GM12878 (cell line): ENCODE measurements at regions of chr17 and their contacts with region 1.

Region 1: DNA sequence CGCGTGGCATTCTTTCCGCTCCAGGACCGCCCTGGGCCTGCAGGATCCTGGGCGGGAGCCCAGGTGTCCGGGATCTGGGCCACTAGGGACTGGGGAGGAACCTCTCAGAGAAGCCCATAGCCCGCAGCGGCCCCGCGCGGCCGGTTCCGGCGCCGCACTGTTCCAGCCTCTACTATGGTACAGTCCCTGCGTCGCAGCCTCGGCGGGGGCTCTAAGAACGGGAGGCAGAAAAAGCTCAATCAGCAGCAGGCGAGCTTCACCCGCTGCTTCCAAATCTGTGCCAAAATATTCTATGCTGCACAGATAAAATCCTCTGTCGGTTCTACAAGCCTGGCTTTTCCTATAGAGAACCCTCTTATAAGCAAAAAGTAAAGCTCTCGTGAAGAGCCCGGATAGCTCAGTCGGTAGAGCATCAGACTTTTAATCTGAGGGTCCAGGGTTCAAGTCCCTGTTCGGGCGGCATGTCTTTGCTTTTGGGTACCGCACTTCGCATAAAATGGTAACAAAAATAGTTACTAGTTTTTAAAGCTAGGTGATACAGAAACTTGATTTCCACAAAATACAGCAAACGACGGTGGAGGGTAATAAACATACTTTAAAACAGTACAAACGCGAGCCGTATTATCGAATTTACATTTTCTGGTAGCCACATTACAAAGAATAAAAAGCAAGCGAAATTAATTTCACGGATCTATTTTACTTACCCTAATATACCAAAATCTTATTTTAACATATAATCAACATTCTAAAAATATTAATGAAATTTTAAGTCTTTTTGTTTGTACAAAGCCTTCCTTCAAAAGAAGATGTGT is 661 bp upstream of the ALOXE3 start:
- DNase-seq: peak; percentile 57
- ATAC-seq: peak; percentile 70
- H3K4me3 ChIP-seq: peak overlapping the region; percentile 86
- H3K27ac ChIP-seq: peak overlapping the region; percentile 12; the same call in 1 of the 2 replicates
- H3K4me1 ChIP-seq: peaks cover 26% of the 10 kb centered on the region
- H3K27me3 ChIP-seq: peaks cover 3 to 9% of the 10 kb centered on the region in 2 experiments; a peak in 3 of 4 replicates
- CTCF ChIP-seq: peak; percentile 85 to 94 (median 93)
- EP300 ChIP-seq: peak in 1 of 2 experiments; percentile 82; a peak in 1 of 4 replicates
- POLR2A ChIP-seq: no peak
- RAD21 ChIP-seq: peak; percentile 46

Region 2: DNA sequence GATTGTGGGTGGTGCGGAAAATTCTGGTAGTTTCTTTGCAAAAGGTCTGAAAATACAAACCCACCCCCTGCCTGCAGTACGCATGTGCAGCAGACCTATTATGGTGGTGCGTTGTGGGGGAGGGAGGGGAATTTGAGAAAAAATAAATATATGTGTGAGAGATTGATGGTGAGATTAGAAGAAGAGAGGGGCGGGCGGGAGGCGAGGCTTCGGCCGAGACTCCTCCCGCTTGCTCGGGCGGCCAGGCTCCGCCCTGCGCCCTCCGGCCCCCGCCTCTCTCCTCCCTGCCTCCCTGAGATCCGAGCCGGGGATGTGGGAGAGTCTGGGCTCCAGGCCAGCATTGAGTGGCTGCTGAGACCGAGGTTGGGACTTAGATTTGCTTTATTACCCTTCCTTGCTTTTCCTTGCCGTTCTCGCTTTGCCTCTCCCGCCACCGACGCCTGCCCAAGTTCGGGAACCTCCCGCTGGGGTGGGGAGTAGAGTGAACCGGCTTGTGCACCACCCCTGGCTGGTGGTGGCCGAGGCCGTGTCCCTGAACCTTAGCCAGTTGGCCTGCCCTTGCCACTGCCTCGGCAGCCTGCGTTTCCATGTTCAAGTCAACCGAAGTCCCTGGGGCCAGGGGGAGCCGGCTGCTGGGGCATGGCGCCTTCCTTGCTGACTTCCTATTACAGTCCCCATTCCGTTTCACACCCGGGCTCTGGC is 231.3 kb before region 1 on chr17:
- CTCF ChIA-PET with region 1: no interaction called
- POLR2A ChIA-PET with region 1: no interaction called
- RAD21 ChIA-PET with region 1: no interaction called
- SMC1A ChIA-PET with region 1: no interaction called
- in situ Hi-C with region 1: no loop called
- intact Hi-C with region 1: no loop called
- DNase-seq: peak; percentile 75
- ATAC-seq: peak; percentile 82
- H3K4me3 ChIP-seq: peak overlapping the region; percentile 88
- H3K27ac ChIP-seq: peak overlapping the region; percentile 91
- H3K4me1 ChIP-seq: peaks cover 6% of the 10 kb centered on the region
- H3K27me3 ChIP-seq: no peaks in the 10 kb centered on the region
- CTCF ChIP-seq: no peak
- EP300 ChIP-seq: peak in 1 of 2 experiments; percentile 54; a peak in 2 of 4 replicates
- POLR2A ChIP-seq: no peak; the same call in 1 of the 2 replicates
- RAD21 ChIP-seq: no peak

Region 3: DNA sequence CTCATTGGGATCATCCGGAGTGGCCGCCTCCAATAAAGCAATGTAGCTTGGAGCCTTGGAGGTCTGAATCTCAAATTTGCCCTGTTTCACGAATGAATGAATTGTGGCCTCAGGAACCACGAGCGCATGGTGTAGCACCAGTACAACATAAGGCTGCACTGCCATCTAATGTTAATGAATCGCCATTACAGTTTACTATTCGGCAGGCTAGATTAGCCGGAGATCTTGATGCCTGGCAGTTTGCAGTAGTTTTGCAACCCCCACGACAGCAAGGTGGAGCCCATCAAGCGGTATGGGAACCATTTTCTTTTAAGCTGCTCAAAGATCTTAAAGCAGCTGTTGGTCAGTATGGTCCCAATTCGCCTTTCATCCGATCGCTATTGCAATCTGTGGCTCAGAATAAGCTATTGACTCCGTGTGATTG is 61.3 kb before region 1 on chr17:
- CTCF ChIA-PET with region 1: interaction called, 106 read pairs
- POLR2A ChIA-PET with region 1: no interaction called
- RAD21 ChIA-PET with region 1: interaction called, 12 read pairs
- SMC1A ChIA-PET with region 1: interaction called, 28 read pairs
- in situ Hi-C with region 1: no loop called
- intact Hi-C with region 1: loop called (anchors 5 kb)
- DNase-seq: peak; percentile 45
- ATAC-seq: peak; percentile 78
- H3K4me3 ChIP-seq: no peak overlapping the region
- H3K27ac ChIP-seq: no peak overlapping the region
- H3K4me1 ChIP-seq: peaks cover 14% of the 10 kb centered on the region
- H3K27me3 ChIP-seq: peaks cover 0 to 4% of the 10 kb centered on the region in 2 experiments; a peak in 1 of 4 replicates
- CTCF ChIP-seq: peak; percentile 69 to 81 (median 74)
- EP300 ChIP-seq: no peak
- POLR2A ChIP-seq: no peak
- RAD21 ChIP-seq: peak; percentile 80

Region 4: DNA sequence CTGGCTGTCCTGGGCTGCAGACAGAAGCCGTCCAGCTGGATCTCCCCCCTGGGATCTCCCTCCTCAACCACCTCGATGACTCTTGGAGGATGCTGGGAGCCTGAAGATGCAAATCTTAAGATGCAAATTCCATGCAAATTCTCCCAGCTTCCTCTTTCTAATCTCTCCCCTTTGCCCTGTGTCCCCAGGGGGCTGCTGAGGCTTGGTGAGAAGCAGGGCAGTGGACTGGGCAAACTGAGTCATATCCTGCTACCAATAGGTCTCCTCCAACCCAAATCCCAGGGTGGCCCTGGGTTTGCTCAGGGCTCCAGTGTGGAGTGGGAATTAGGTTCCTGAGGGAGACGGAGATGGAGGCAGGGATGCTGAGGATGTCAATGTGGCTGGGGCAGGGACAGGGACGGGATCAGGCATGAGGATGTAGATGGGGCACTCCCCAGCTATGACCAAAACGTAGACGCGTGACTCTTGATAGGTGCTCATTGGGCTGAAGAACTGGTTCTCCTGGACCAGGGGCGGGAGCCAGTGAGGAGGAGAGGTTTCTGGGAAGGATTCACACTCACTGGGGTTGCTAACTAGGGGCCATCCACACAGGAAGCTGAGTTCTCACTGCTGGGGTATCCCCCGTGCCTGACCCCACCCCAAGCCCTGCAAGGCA is 27.8 kb before region 1 on chr17:
- CTCF ChIA-PET with region 1: interaction called, 105 read pairs
- POLR2A ChIA-PET with region 1: interaction called, 7 read pairs
- RAD21 ChIA-PET with region 1: interaction called, 40 read pairs
- SMC1A ChIA-PET with region 1: interaction called, 16 read pairs
- in situ Hi-C with region 1: no loop called
- intact Hi-C with region 1: no loop called
- DNase-seq: peak; percentile 61
- ATAC-seq: peak; percentile 90
- H3K4me3 ChIP-seq: no peak overlapping the region
- H3K27ac ChIP-seq: no peak overlapping the region
- H3K4me1 ChIP-seq: peaks cover 8% of the 10 kb centered on the region
- H3K27me3 ChIP-seq: peaks cover 0 to 4% of the 10 kb centered on the region in 2 experiments; a peak in 1 of 4 replicates
- CTCF ChIP-seq: no peak
- EP300 ChIP-seq: 0 out of 4 replicates have a peak, but pooled peaks of 1 of the 2 experiments have one; percentile 21
- POLR2A ChIP-seq: no peak
- RAD21 ChIP-seq: no peak

Region 5: DNA sequence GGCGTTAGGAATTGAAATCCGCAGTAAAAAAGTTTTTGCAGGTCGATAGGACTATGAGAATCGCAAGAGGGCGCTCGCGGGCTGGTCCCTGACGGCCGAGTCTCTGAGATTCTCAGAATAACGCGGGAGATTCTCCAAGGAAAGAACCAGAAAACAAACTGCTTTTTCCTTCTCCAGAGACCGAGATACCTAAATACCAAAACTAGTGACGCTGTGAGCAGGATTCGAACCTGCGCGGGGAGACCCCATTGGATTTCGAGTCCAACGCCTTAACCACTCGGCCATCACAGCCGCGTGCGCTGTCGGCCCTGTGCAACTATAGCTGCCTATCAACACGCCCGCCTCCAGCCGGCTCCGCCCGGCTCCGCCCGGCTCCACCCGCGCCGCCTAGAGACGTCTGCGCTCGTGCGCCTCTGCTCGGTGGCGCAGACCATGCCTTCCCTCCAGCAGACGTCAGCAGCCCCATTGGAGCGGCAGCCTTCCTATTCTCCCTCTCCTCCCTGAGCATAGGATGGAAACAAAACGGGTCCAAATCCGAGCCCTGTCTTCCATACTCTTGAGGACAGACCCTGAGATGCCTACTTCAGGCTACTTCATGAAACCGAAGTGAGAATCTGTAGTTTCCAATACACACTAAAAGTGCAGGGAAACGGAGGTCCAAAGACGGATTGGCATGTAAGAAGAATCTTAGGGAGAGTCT is 19.8 kb after region 1 on chr17:
- CTCF ChIA-PET with region 1: interaction called, 40 read pairs
- POLR2A ChIA-PET with region 1: interaction called, 17 read pairs
- RAD21 ChIA-PET with region 1: interaction called, 32 read pairs
- SMC1A ChIA-PET with region 1: interaction called, 9 read pairs
- in situ Hi-C with region 1: no loop called
- intact Hi-C with region 1: loop called (anchors 1 kb)
- DNase-seq: peak; percentile 94
- ATAC-seq: peak; percentile 93
- H3K4me3 ChIP-seq: peak overlapping the region; percentile 72
- H3K27ac ChIP-seq: peak overlapping the region; percentile 97
- H3K4me1 ChIP-seq: peaks cover 7% of the 10 kb centered on the region
- H3K27me3 ChIP-seq: no peaks in the 10 kb centered on the region
- CTCF ChIP-seq: peak; percentile 68 to 78 (median 76)
- EP300 ChIP-seq: 0 out of 4 replicates have a peak, but pooled peaks of 1 of the 2 experiments have one; percentile 4
- POLR2A ChIP-seq: peak; percentile 81
- RAD21 ChIP-seq: peak; percentile 57

Region 6: GRCh38 chr17:8162233-8162996 is 43.4 kb after region 1 on chr17 and contains the start of gene VAMP2:
- CTCF ChIA-PET with region 1: interaction called, 46 read pairs
- POLR2A ChIA-PET with region 1: interaction called, 28 read pairs
- RAD21 ChIA-PET with region 1: interaction called, 16 read pairs
- SMC1A ChIA-PET with region 1: interaction called, 23 read pairs
- in situ Hi-C with region 1: no loop called
- intact Hi-C with region 1: no loop called
- DNase-seq: no peak
- ATAC-seq: peak; percentile 69
- H3K4me3 ChIP-seq: peak within 1 kb of the TSS; percentile 95
- H3K27ac ChIP-seq: peak within 1 kb of the TSS; percentile 87
- H3K4me1 ChIP-seq: peaks cover 33% of the 10 kb centered on the region
- H3K27me3 ChIP-seq: no peaks in the 10 kb centered on the region
- CTCF ChIP-seq: no peak
- EP300 ChIP-seq: no peak
- POLR2A ChIP-seq: peak; percentile 93
- RAD21 ChIP-seq: no peak
- polyA plus RNA-seq, gene VAMP2: 3.0 to 6.3 TPM

Region 7: GRCh38 chr17:8222630-8223356 is 103.8 kb after region 1 on chr17:
- CTCF ChIA-PET with region 1: interaction called, 35 read pairs
- POLR2A ChIA-PET with region 1: interaction called, 14 read pairs
- RAD21 ChIA-PET with region 1: interaction called, 16 read pairs
- SMC1A ChIA-PET with region 1: interaction called, 14 read pairs
- in situ Hi-C with region 1: no loop called
- intact Hi-C with region 1: loop called (anchors 1 kb)
- DNase-seq: peak; percentile 81
- ATAC-seq: peak; percentile 56
- H3K4me3 ChIP-seq: peak overlapping the region; percentile 83
- H3K27ac ChIP-seq: peak overlapping the region; percentile 97
- H3K4me1 ChIP-seq: peaks cover 27% of the 10 kb centered on the region
- H3K27me3 ChIP-seq: no peaks in the 10 kb centered on the region
- CTCF ChIP-seq: no peak
- EP300 ChIP-seq: peak in 1 of 2 experiments; percentile 12; a peak in 1 of 4 replicates
- POLR2A ChIP-seq: peak; percentile 81
- RAD21 ChIP-seq: no peak

Region 8: GRCh38 chr17:8300627-8301242 is 181.8 kb after region 1 on chr17:
- CTCF ChIA-PET with region 1: interaction called, 15 read pairs
- POLR2A ChIA-PET with region 1: interaction called, 5 read pairs
- RAD21 ChIA-PET with region 1: interaction called, 9 read pairs
- SMC1A ChIA-PET with region 1: interaction called, 5 read pairs
- in situ Hi-C with region 1: loop called (anchors 5 kb)
- intact Hi-C with region 1: loop called (anchors 5 kb)
- DNase-seq: peak; percentile 31
- ATAC-seq: peak; percentile 98
- H3K4me3 ChIP-seq: no peak overlapping the region
- H3K27ac ChIP-seq: no peak overlapping the region
- H3K4me1 ChIP-seq: no peaks in the 10 kb centered on the region
- H3K27me3 ChIP-seq: no peaks in the 10 kb centered on the region
- CTCF ChIP-seq: peak; percentile 86 to 96 (median 90); a peak in 5 of 6 replicates
- EP300 ChIP-seq: no peak
- POLR2A ChIP-seq: no peak
- RAD21 ChIP-seq: peak; percentile 90